Prostate gland (tissue), 2 donors: ENCODE measurements at regions of chr17 and their contacts with region 1.

Region 1: GRCh38 chr17:3012926-3013581 is 50.4 kb downstream of the OR1D5 start:
- DNase-seq: peak; percentile 43
- H3K4me3 ChIP-seq: no peak overlapping the region
- H3K27ac ChIP-seq: no peak overlapping the region
- H3K4me1 ChIP-seq: no peaks in the 10 kb centered on the region
- H3K27me3 ChIP-seq: no peaks in the 10 kb centered on the region
- CTCF ChIP-seq: peak; percentile 65 to 85 (median 78)
- POLR2A ChIP-seq: no peak

Region 2: DNA sequence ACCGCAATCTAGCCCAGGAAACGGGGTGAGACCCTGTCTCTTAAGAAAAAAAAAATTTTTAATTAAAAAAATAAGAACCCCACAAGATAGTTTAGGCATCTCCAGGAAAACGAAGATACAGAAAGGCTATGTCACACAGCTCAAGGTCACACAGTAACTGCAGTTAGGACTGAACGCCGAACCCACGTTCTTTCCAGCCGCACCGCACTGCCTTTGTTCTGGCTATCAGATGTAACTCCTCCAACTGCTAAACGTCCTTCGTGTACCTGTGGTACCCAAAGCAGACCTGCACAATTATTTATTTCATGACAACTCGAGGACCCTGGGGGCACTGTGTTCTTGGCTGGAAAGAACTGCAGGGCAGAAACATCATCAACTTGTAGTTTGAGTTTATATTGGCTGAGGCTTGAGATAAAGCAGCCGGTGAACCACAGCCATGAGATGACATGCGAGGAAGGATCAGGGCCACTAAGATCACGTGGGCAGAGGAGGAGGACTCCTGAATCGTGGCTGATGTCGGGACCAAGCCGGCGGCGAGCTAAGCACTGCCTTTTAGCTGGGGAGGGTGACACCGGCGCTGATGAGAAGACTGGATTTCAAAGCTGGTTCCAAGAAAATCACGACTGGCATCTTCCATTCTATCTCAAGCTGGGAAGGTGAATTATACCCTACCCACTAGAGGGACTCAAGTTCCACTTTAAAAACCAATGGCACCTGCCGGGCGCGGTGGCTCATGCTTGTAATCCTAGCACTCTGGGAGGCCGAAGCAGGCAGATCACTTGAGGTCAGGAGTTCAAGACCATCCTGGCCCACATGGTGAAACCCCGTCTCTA is 591.5 kb before region 1 on chr17:
- intact Hi-C with region 1: loop called (anchors 10 kb)
- DNase-seq: no peak
- H3K4me3 ChIP-seq: no peak overlapping the region
- H3K27ac ChIP-seq: peak overlapping the region in 1 of 2 donors; percentile 4
- H3K4me1 ChIP-seq: no peaks in the 10 kb centered on the region
- H3K27me3 ChIP-seq: no peaks in the 10 kb centered on the region
- CTCF ChIP-seq: peak in 2 of 4 experiments; percentile 19 to 22
- POLR2A ChIP-seq: no peak

Region 3: DNA sequence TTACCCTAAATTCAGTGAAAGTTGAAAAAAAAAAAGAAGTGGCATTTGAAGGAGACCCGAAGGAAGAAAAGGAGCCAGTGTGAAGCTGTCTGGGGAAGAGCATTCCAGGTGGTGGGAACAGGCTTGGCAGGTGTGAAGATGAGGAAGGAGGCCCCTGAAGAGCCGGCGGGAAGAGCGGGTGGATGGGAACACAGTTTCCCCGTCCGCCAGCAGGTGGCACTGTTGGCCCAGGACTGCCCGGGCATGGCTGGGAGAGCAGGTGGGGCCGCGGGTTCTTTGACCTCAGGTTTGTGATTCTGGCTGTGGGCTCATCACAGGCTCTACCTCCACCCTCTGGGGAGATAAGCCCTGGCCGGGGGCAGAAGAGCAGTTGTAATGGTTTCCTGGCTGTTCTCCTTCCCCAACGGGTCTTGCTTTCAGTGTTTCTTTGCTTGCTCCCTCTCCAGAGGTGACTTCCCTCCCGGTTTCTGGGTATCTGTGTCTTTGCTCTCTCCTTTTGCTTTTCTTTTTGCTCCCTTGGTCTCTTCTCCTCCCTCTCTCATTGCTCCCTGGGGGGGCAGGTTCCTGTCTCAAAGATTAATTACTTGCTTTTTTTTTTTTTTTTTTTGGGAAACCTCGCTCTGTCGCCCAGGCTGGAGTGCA is 184.5 kb before region 1 on chr17:
- intact Hi-C with region 1: loop called (anchors 1 kb)
- DNase-seq: no peak
- H3K4me3 ChIP-seq: no peak overlapping the region
- H3K27ac ChIP-seq: no peak overlapping the region
- H3K4me1 ChIP-seq: no peaks in the 10 kb centered on the region
- H3K27me3 ChIP-seq: no peaks in the 10 kb centered on the region
- CTCF ChIP-seq: peak; percentile 51 to 86 (median 81)
- POLR2A ChIP-seq: no peak

Region 4: DNA sequence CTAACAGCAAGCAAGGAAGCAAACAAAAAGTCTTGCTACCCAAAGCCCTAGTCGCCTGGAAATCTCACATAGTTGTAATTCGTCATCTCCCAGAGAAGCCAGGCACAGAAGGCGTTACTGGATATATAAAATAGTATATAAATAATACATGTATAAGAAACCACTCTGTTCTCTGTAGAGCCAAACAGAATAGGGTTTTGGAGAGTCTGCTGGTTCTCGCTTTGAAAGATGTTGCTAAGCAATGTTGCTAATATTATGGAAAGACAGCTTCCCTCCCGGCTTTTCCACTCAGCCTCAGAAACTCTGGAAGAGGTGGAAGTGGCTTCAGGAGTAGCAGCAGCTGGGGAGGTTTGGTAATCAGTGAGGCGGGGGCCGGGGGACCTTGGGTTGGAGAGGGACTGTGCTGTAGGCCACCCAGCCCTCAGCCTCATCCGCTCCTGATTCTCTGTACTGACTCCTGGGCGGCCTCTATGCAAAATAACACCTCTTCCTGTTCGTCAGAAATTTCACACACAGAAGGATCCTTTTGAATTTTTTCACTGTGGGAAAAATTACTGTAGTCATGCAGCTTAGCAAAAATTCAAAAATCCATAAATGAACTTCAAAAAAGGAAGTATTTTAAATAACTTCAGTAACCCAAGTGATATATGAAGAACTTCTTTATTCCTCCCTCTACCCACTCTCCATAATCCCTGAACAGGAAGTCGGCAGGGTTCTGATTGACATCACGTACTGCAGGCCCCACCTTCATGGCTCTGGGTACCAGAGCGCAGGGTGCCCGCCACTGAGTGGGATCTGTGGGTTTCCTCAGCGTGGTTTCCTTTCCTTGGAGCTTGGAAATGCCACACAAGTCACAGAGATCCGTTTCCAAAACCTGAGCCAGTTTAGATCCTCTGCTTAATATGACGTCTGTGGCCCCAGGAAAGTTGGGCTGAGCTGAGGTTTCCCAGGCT is 165.4 kb before region 1 on chr17:
- intact Hi-C with region 1: loop called (anchors 5 kb)
- DNase-seq: no peak
- H3K4me3 ChIP-seq: no peak overlapping the region
- H3K27ac ChIP-seq: no peak overlapping the region
- H3K4me1 ChIP-seq: no peaks in the 10 kb centered on the region
- H3K27me3 ChIP-seq: no peaks in the 10 kb centered on the region
- CTCF ChIP-seq: no peak
- POLR2A ChIP-seq: no peak

Region 5: DNA sequence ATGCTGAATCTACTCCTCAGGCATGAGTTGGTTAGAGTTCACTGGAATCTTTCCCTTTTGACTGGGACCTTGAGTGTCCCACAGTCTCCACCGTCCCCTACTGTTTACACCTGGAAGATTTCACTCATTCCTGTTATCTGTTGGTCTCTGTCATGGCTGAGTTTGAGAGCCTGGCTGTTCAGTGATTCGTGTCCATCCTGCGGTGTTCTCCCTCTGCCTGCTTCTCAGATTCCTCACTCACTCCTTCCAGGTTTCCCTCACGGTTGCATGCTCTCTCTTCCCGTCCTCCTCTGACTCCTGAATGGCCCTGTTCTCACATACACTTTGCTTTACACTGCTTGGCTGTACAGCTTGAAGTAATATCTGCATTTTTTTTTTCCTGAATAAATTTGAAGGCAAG is 25.9 kb after region 1 on chr17:
- intact Hi-C with region 1: no loop called
- DNase-seq: no peak
- H3K4me3 ChIP-seq: no peak overlapping the region
- H3K27ac ChIP-seq: no peak overlapping the region
- H3K4me1 ChIP-seq: no peaks in the 10 kb centered on the region
- H3K27me3 ChIP-seq: no peaks in the 10 kb centered on the region
- CTCF ChIP-seq: no peak
- POLR2A ChIP-seq: no peak